Prostate gland (tissue), 2 donors: ENCODE measurements at regions of chr4 and their contacts with region 1.

Region 1: GRCh38 chr4:184474263-184475095 is at the start of gene IRF2:
- DNase-seq: peak; percentile 98
- H3K4me3 ChIP-seq: peak within 1 kb of the TSS; percentile 69 to 96
- H3K27ac ChIP-seq: peak within 1 kb of the TSS; percentile 95 to 100
- H3K4me1 ChIP-seq: no peaks in the 10 kb centered on the region
- H3K27me3 ChIP-seq: no peaks in the 10 kb centered on the region
- CTCF ChIP-seq: peak in 2 of 4 experiments; percentile 48 to 63
- POLR2A ChIP-seq: peak; percentile 90
- total RNA-seq, gene IRF2: 40.7 to 49.9 TPM

Region 2: DNA sequence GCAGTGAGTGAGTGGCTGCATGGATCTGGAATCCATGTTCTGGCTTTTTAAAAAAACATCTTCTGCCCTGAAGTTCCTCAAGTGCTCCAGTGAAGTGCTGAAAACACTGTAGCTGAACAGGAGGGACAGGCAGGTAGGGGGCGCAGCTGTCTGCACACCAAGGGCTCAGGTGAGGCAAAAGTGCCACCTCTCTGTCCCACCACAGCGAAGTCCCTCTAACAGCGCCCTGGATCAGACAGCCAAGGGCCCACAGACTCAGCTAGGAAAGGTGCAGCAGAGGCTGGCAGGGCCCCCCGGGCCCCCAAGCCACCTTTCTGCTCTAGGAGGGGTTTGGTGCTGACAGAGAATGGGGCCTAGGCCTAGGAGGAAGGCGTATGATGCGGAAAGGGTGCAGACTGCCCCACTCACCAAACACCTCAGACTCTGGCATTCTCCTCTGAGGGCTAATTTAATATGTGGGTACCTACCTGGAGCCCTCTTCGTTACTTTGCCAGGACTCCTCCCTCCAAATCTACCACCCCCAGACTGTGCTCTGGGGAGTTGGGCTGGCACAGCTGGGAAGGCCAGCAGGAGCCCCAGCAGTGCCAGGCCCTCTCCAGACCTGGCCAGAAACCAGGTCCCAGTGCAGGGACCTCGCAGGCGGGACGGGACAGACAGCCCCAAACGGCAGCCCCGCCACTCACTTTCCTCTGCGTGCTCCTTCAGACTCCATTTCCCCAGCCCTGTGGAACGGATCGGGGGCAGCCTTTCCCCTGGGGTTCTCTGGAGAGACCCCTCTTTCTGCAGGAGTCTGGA is 330.5 kb before region 1 on chr4:
- intact Hi-C with region 1: no loop called
- DNase-seq: no peak
- H3K4me3 ChIP-seq: no peak overlapping the region
- H3K27ac ChIP-seq: no peak overlapping the region
- H3K4me1 ChIP-seq: no peaks in the 10 kb centered on the region
- H3K27me3 ChIP-seq: no peaks in the 10 kb centered on the region
- CTCF ChIP-seq: no peak
- POLR2A ChIP-seq: no peak

Region 3: DNA sequence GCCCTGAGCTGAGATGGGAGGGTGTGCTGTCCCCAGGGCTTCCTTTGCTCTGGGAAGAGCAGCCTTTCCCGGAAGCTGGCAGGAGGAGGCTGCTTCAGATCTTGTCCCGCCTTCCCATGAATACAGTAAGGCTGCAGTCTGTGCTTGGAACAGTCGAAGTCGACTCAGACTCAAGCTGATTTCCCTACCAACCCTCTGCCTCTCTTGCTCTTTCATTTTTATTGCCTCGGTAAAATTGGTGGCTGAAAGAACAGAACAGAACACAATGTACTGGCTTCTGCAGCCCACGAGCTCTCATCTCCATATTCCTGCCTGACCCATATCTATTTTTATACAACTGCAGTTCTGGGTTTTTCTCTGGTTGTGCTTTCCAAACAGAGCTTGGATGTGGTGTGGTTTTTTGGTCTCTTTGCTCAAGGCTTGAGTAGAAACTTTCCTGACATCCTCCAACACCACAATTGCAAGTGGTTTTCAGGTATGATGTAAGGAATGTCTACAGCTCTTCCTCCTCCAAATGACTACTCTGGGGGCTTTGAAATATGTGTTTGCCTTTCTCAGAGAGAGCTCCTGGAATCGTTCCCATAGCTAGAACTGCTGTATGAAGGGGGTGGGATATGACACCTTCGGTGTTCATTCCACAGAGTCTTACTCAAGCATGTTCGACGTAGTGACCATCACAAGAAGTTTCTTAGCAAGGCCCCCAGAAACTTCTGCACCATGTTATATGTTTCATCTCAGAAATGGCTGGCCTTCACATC is 318.1 kb before region 1 on chr4:
- intact Hi-C with region 1: no loop called
- DNase-seq: no peak
- H3K4me3 ChIP-seq: no peak overlapping the region
- H3K27ac ChIP-seq: peak overlapping the region; percentile 63 to 66
- H3K4me1 ChIP-seq: no peaks in the 10 kb centered on the region
- H3K27me3 ChIP-seq: no peaks in the 10 kb centered on the region
- CTCF ChIP-seq: no peak
- POLR2A ChIP-seq: no peak

Region 4: DNA sequence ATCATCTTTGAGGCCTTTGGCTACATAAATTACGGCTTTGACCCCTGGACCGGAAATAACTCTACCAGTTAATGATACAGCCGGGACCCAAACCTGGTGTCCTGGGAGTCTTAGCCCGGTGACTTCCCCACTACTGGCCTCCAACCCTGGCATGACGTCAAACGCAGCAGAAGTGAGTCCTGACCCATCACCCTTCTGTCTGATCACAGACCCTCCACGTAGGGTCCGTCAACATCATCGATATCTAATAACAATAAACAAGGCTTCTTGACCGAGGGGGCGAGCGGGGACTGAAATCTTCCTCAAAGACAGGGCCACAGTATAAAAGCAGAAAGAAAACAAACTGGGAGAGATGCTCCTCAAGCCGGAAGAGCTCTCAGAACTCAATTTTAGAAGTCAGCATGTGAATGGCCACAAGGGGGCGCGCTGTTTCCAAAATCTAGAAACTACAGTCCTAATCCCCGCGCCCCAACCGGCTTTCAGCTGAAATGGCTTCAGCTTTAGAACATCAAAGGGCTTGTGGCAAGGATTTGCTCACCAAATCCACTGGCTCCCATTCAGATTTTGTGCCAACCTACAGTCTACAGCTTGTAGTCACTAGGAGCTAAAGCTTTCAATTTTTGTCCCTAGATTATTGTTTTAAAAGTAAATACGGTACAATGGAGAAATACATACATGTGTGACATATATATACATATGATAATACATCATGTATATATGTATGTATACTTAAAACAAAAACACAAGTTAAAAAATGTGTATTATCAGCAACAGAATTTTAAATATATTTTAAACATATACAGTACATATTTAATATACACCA is 210.4 kb before region 1 on chr4:
- intact Hi-C with region 1: loop called (anchors 5 kb)
- DNase-seq: peak; percentile 92
- H3K4me3 ChIP-seq: no peak overlapping the region
- H3K27ac ChIP-seq: no peak overlapping the region
- H3K4me1 ChIP-seq: no peaks in the 10 kb centered on the region
- H3K27me3 ChIP-seq: no peaks in the 10 kb centered on the region
- CTCF ChIP-seq: peak; percentile 86 to 97 (median 91)
- POLR2A ChIP-seq: no peak

Region 5: DNA sequence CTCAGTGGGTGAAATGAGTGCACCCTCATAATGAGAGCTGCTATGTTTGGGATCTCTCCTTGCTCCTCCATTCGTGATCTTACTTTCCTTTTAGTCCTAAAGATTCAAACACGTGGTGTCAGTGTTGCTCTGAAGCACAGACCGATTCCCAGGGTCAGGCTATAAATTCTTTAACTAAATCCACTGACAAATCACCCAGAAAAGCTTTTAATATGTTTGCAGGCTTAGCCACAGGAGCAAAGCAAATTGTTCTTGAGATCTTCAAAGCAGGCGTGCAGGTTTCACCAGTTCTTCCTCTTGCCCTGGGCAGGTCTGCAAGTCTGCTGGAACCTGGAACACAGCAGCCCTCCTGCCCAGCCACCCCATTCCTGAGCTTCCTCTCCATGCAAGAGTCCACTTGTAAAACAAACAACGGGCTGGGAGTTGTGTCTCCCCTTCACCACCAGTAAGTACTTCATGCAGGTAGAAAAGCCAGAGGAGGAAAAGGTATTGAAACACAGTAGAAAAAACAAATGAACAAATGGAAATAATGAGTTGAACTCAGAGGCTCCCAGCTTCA is 186.7 kb before region 1 on chr4:
- intact Hi-C with region 1: loop called (anchors 5 kb)
- DNase-seq: peak; percentile 94
- H3K4me3 ChIP-seq: peak overlapping the region in 1 of 2 donors; percentile 9
- H3K27ac ChIP-seq: peak overlapping the region; percentile 78 to 82
- H3K4me1 ChIP-seq: peaks cover 3% of the 10 kb centered on the region
- H3K27me3 ChIP-seq: no peaks in the 10 kb centered on the region
- CTCF ChIP-seq: peak in 3 of 4 experiments; percentile 42 to 65 (median 58)
- POLR2A ChIP-seq: no peak

Region 6: DNA sequence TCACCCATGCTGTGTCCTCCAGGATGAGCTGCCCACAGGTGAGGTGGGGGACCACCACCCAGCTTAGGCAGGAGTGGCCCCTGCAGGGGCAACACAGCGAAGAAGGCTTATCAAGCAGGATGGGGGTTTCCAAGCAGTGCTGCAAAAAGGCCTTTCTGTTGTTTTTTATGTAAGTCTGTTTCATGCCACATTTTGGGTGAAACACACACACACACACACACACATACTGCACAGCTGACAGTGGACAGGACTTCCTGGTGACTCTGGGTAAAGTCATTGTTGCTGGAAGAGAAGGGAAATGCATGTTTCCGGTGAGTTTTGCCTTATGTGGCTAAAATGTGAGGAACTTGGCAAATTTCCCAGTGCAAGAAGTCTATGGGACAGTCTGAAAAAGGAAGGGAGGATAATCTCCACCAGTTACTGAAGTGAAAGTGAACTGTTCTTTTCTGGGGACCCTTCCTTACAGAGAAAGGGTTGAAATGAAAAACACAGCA is 119.3 kb before region 1 on chr4:
- intact Hi-C with region 1: no loop called
- DNase-seq: no peak
- H3K4me3 ChIP-seq: no peak overlapping the region
- H3K27ac ChIP-seq: no peak overlapping the region
- H3K4me1 ChIP-seq: no peaks in the 10 kb centered on the region
- H3K27me3 ChIP-seq: no peaks in the 10 kb centered on the region
- CTCF ChIP-seq: no peak
- POLR2A ChIP-seq: no peak

Region 7: GRCh38 chr4:184384056-184384809 is 90.2 kb before region 1 on chr4:
- intact Hi-C with region 1: loop called (anchors 5 kb)
- DNase-seq: peak; percentile 71
- H3K4me3 ChIP-seq: peak overlapping the region in 1 of 2 donors; percentile 0
- H3K27ac ChIP-seq: peak overlapping the region; percentile 67 to 82
- H3K4me1 ChIP-seq: peaks cover 13% of the 10 kb centered on the region
- H3K27me3 ChIP-seq: no peaks in the 10 kb centered on the region
- CTCF ChIP-seq: no peak
- POLR2A ChIP-seq: peak; percentile 18

Region 8: GRCh38 chr4:184400375-184400870 is 74.1 kb before region 1 on chr4:
- intact Hi-C with region 1: loop called (anchors 5 kb)
- DNase-seq: no peak
- H3K4me3 ChIP-seq: no peak overlapping the region
- H3K27ac ChIP-seq: peak overlapping the region; percentile 28 to 88
- H3K4me1 ChIP-seq: peaks cover 8% of the 10 kb centered on the region
- H3K27me3 ChIP-seq: no peaks in the 10 kb centered on the region
- CTCF ChIP-seq: peak in 2 of 4 experiments; percentile 26
- POLR2A ChIP-seq: no peak

Region 9: DNA sequence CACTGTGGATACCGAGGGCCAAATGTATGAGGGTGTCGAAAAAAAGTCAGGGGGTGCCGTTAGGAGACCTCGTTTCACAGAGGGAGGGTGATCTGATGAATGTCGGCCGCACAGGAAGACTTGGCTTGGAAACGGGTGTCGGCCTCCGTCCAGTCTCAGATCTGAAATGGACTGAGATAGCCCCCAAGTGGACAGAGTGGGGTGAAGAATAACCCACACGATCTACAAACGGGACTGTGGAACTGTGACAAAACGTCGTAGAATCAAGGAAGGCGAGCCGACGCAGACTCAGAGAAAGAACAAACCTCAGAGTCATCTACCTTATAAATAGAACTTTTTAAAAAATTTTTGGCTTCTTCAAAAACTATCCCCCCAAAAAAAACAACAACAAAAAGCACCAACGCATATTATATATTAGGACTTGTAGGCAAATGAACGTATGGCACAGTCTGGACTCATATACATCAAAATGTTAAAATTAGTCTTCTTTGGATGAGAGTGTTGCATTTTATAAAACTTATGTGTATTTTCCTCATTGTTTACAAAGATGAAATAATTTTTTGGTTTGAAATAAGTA is 63.6 kb after region 1 on chr4:
- intact Hi-C with region 1: loop called (anchors 1 kb)
- DNase-seq: peak; percentile 92
- H3K4me3 ChIP-seq: peak overlapping the region; percentile 56 to 62
- H3K27ac ChIP-seq: peak overlapping the region; percentile 97 to 98
- H3K4me1 ChIP-seq: peaks cover 4% of the 10 kb centered on the region
- H3K27me3 ChIP-seq: no peaks in the 10 kb centered on the region
- CTCF ChIP-seq: peak; percentile 38 to 92 (median 78)
- POLR2A ChIP-seq: no peak

Region 10: GRCh38 chr4:184649026-184649970 is 174.8 kb after region 1 on chr4 and contains the starts of genes CASP3 and PRIMPOL:
- intact Hi-C with region 1: loop called (anchors 10 kb)
- DNase-seq: peak; percentile 96
- H3K4me3 ChIP-seq: peak within 1 kb of the TSS; percentile 65 to 73
- H3K27ac ChIP-seq: peak within 1 kb of the TSS; percentile 91 to 94
- H3K4me1 ChIP-seq: peaks cover 14% of the 10 kb centered on the region
- H3K27me3 ChIP-seq: no peaks in the 10 kb centered on the region
- CTCF ChIP-seq: peak; percentile 10 to 47 (median 20)
- POLR2A ChIP-seq: peak; percentile 80
- total RNA-seq, gene CASP3: 13.3 to 13.8 TPM
- total RNA-seq, gene PRIMPOL: 14.3 to 28.6 TPM

Region 11: DNA sequence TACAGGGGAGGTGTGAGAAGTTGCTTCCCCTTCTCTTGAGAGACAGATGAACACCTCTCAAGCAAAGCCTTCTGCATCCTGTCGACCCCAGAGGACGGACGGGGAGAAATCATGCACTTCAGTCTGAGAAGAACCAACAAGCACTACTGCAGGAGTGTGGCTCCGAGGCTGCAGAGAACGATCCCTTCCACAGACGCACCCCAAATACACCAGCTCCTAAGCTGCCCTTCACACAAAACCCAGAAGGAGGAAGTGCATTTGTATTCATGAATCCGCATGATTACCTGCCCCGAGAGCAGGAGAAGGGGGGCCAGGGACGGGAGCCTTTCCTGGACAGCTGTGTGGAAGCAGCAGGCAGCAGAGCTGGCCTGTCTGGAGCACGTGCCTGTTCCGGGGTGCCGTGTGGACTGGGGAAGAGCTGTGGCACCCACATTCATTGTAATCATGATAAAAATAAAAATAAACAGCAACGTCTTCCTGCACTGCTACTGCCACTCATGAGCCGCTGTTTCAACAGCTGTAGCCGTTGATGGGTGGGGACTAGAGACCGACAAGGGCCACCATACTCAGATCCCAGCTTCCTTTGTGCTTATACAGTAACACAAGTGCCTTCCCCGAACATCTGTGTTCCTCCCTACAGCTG is 308.4 kb after region 1 on chr4:
- intact Hi-C with region 1: no loop called
- DNase-seq: no peak
- H3K4me3 ChIP-seq: no peak overlapping the region
- H3K27ac ChIP-seq: no peak overlapping the region
- H3K4me1 ChIP-seq: no peaks in the 10 kb centered on the region
- H3K27me3 ChIP-seq: no peaks in the 10 kb centered on the region
- CTCF ChIP-seq: no peak
- POLR2A ChIP-seq: no peak